PC-3 (cell line): ENCODE measurements at regions of chr6 and their contacts with region 1.

Region 1: GRCh38 chr6:4358414-4359114 is 223.2 kb upstream of the ECI2 start:
- DNase-seq: peak; percentile 100
- ATAC-seq: peak; percentile 89
- H3K4me3 ChIP-seq: peak overlapping the region; percentile 47
- H3K27ac ChIP-seq: peak overlapping the region; percentile 95
- H3K4me1 ChIP-seq: peaks cover 43% of the 10 kb centered on the region
- H3K27me3 ChIP-seq: no peaks in the 10 kb centered on the region
- CTCF ChIP-seq: no peak

Region 2: GRCh38 chr6:4102687-4103244 is 255.8 kb before region 1 on chr6:
- CTCF ChIA-PET with region 1: no interaction called
- POLR2A ChIA-PET with region 1: no interaction called
- intact Hi-C with region 1: no loop called
- DNase-seq: no peak
- ATAC-seq: no peak
- H3K4me3 ChIP-seq: no peak overlapping the region
- H3K27ac ChIP-seq: no peak overlapping the region
- H3K4me1 ChIP-seq: peaks cover 7% of the 10 kb centered on the region
- H3K27me3 ChIP-seq: no peaks in the 10 kb centered on the region
- CTCF ChIP-seq: no peak

Region 3: DNA sequence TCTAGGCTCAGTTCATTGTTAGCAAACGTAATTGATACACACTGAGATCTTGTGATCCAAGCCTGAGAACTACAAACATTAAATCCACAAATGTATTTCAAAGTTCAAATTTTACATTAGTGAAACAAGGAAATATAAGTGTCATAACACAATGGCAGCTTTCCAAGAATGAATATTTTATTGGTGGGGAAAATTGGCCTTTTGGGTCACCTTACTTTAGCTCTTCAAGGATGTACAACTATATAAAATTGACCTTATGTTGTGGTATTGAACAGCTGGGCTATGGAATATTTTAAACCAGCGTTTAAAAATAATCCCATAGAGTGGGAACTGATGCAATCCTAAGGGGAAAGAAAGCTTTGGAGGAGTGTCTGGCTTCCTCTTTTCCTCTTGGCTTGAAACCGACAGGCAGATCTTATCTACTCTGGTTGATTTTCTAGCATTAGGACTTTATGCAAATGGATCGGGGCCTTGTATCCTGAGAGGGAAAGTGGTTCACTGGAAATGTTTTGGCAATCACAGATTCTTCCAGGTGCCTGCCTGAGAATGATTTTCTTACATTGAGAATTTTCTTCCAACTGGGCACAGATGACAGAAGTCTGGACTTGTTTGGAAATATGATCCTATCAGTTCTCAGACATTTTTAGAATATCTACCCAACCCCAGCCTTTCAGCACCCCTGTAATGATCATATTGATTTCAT is 38.4 kb before region 1 on chr6:
- CTCF ChIA-PET with region 1: no interaction called
- POLR2A ChIA-PET with region 1: interaction called, 5 read pairs
- intact Hi-C with region 1: loop called (anchors 1 kb)
- DNase-seq: peak; percentile 83
- ATAC-seq: peak; percentile 40
- H3K4me3 ChIP-seq: peak overlapping the region; percentile 20; the same call in 1 of the 2 replicates
- H3K27ac ChIP-seq: peak overlapping the region; percentile 94
- H3K4me1 ChIP-seq: peaks cover 60% of the 10 kb centered on the region
- H3K27me3 ChIP-seq: no peaks in the 10 kb centered on the region
- CTCF ChIP-seq: no peak

Region 4: GRCh38 chr6:4402439-4402976 is 43.9 kb after region 1 on chr6:
- CTCF ChIA-PET with region 1: no interaction called
- POLR2A ChIA-PET with region 1: no interaction called
- intact Hi-C with region 1: loop called (anchors 1 kb)
- DNase-seq: peak; percentile 93
- ATAC-seq: peak; percentile 91
- H3K4me3 ChIP-seq: no peak overlapping the region
- H3K27ac ChIP-seq: peak overlapping the region; percentile 92
- H3K4me1 ChIP-seq: peaks cover 26% of the 10 kb centered on the region
- H3K27me3 ChIP-seq: no peaks in the 10 kb centered on the region
- CTCF ChIP-seq: no peak

Region 5: DNA sequence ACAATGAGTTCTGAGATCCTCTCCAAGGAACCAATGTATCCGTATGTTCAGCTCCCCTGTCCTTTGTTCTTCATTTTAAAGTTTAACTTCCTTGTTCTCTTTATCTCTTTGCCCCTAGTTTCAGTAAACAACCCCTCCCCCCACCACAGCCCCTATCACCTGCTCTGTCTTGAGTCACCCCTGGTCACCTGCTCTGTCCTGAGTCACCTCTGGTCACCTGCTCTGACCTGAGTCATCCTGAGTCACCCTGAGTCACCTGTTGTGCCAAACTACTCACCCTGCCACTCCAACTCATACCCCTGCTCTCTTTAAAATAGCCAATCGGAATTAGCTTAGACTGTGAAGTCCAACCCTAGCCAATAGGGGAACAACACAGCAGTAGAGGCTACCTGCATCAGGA is 129.0 kb after region 1 on chr6:
- CTCF ChIA-PET with region 1: no interaction called
- POLR2A ChIA-PET with region 1: no interaction called
- intact Hi-C with region 1: loop called (anchors 2 kb)
- DNase-seq: peak; percentile 92
- ATAC-seq: peak; percentile 89
- H3K4me3 ChIP-seq: no peak overlapping the region
- H3K27ac ChIP-seq: peak overlapping the region; percentile 48
- H3K4me1 ChIP-seq: no peaks in the 10 kb centered on the region
- H3K27me3 ChIP-seq: no peaks in the 10 kb centered on the region
- CTCF ChIP-seq: no peak

Region 6: DNA sequence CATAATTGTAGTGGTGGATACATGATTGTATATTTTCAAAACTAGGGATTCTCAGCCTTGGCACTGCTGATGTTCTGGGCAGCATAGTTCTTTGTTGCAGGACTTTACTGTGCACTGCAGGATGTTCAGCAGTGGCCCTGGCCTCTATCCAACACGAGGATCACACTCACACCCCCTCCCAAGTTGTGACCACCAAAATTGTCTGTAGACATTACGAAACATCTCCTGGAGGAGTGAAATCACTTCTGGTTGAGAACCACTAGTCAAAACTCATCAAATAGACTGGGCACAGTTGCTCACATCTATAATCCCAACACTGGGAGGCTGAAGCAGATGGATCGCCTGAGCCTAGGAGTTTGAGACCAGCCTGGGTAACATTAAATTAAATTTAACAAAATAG is 294.6 kb after region 1 on chr6:
- CTCF ChIA-PET with region 1: no interaction called
- POLR2A ChIA-PET with region 1: no interaction called
- intact Hi-C with region 1: no loop called
- DNase-seq: no peak
- ATAC-seq: no peak
- H3K4me3 ChIP-seq: no peak overlapping the region
- H3K27ac ChIP-seq: no peak overlapping the region
- H3K4me1 ChIP-seq: no peaks in the 10 kb centered on the region
- H3K27me3 ChIP-seq: no peaks in the 10 kb centered on the region
- CTCF ChIP-seq: no peak